ENCODE measurements at regions of chr9 and their contacts with region 1.

Region 1: DNA sequence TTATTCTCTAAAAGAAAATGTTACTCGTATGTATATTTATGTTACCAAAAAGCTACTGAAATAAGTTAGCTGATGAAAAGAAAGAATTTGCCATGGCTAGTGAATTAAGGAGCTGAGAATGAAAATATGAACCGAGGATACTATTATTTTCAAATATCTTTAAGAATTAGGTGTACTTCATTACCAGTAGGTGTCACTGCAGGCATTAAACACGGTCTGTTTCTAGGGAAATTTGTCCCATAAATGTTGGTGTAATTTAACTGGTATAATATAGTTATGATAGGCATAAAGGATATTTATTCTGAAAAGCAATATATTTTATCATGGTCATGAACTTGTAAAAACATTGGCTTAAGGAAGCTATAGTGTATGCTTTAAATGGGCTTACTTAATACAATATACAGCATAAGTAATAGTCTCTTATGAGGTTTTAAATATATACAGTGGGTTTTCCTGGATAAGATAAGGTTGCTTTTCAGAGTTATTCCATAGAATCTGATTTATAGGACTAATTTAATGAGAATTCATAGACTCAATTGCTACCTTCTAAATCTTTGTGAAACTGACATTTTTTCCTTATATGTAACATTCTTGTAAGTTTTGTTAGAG is 72.4 kb upstream of the MPDZ start:
- H3K4me3 ChIP-seq: no peak overlapping the region
- H3K27ac ChIP-seq: no peak overlapping the region
- H3K4me1 ChIP-seq: no peaks in the 10 kb centered on the region
- CTCF ChIP-seq: no peak

Region 2: DNA sequence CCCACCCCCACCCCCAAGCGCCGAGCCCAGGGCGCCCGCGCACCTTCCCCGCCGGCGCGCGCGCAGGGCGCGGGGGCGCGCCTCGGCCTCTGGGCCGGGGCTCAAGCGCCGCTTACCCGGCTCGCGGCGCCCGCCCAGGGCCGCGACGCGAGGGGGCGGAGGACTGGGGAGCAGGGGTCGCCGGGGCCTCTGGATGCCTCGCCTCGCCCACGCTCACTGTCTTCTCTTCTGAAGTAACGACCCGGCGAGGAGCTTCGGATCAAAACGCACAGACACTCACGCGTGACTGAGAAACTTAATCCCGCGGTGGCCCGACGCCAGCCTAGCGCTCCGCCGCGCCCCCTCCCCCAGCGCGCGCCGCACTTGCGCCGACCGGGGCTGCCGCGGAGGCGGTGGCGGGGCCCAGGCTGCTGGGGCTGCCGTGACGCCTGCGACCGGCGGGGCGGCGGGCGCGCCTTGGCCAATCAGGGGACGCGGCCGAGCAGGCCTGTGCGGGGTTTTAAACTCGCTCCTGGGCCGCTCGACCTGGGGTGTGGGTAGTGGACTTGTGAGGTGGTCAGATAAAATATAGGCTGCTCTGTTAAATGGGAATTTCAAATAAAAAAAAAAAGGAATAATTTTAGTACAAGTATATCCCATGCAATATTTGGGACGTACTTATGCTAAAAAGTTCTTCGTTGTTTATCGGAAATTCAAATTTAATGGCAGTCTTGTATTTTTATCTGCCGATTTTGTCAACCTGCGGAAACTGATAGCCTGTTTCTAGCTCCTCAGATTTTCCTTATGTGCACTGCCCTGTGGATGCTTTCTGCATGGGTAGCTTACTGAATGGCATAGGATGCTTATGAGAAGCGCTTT is 72.4 kb before region 1 on chr9 and contains the start of gene MPDZ:
- CTCF ChIA-PET with region 1: interaction called, 11 read pairs
- POLR2A ChIA-PET with region 1: no interaction called
- H3K4me3 ChIP-seq: peak within 1 kb of the TSS; percentile 80
- H3K27ac ChIP-seq: peak within 1 kb of the TSS; percentile 94
- H3K4me1 ChIP-seq: peaks cover 5% of the 10 kb centered on the region; the same call in 1 of the 2 replicates
- CTCF ChIP-seq: no peak

Region 3: GRCh38 chr9:13324988-13325387 is 26.9 kb before region 1 on chr9:
- CTCF ChIA-PET with region 1: interaction called, 10 read pairs
- POLR2A ChIA-PET with region 1: no interaction called
- H3K4me3 ChIP-seq: no peak overlapping the region
- H3K27ac ChIP-seq: no peak overlapping the region
- H3K4me1 ChIP-seq: no peaks in the 10 kb centered on the region
- CTCF ChIP-seq: no peak

Region 4: GRCh38 chr9:13598738-13599137 is 246.9 kb after region 1 on chr9:
- CTCF ChIA-PET with region 1: no interaction called
- POLR2A ChIA-PET with region 1: no interaction called
- H3K4me3 ChIP-seq: no peak overlapping the region
- H3K27ac ChIP-seq: no peak overlapping the region
- H3K4me1 ChIP-seq: no peaks in the 10 kb centered on the region
- CTCF ChIP-seq: no peak

Measured in HEK293 (cell line).